PC-9 (cell line): ENCODE measurements at regions of chr4 and their contacts with region 1.

Region 1: GRCh38 chr4:165131247-165131832 is 18.7 kb upstream of the TMEM192 start:
- DNase-seq: peak; percentile 35 to 69
- H3K4me3 ChIP-seq: no peak overlapping the region
- H3K27ac ChIP-seq: no peak overlapping the region
- H3K4me1 ChIP-seq: no peaks in the 10 kb centered on the region
- H3K27me3 ChIP-seq: no peaks in the 10 kb centered on the region
- CTCF ChIP-seq: peak; percentile 89

Region 2: DNA sequence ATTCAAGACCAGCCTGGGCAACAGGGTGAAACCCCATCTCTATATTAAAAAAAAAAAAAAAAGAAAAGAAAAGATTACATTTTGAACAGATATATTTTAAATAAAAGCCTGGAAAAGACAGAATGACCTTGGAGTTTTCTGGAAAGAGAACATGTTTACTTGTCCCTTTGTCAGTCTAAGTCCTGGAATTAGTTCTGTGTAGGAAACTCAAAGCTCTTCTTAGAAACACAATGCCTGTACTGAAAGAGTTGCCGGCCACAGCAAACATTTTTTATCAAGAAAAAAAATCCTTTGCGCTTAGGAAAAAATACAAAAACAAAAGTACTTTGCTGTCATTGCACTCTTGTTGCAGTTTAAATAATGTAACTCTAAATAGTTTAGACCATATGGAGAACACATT is 317.8 kb before region 1 on chr4:
- CTCF ChIA-PET with region 1: no interaction called
- POLR2A ChIA-PET with region 1: no interaction called
- intact Hi-C with region 1: no loop called
- DNase-seq: no peak
- H3K4me3 ChIP-seq: no peak overlapping the region
- H3K27ac ChIP-seq: no peak overlapping the region
- H3K4me1 ChIP-seq: no peaks in the 10 kb centered on the region
- H3K27me3 ChIP-seq: no peaks in the 10 kb centered on the region
- CTCF ChIP-seq: no peak

Region 3: GRCh38 chr4:165152527-165152926 is 21.2 kb after region 1 on chr4:
- CTCF ChIA-PET with region 1: no interaction called
- POLR2A ChIA-PET with region 1: no interaction called
- intact Hi-C with region 1: no loop called
- DNase-seq: no peak
- H3K4me3 ChIP-seq: no peak overlapping the region
- H3K27ac ChIP-seq: no peak overlapping the region
- H3K4me1 ChIP-seq: no peaks in the 10 kb centered on the region
- H3K27me3 ChIP-seq: no peaks in the 10 kb centered on the region
- CTCF ChIP-seq: no peak

Region 4: DNA sequence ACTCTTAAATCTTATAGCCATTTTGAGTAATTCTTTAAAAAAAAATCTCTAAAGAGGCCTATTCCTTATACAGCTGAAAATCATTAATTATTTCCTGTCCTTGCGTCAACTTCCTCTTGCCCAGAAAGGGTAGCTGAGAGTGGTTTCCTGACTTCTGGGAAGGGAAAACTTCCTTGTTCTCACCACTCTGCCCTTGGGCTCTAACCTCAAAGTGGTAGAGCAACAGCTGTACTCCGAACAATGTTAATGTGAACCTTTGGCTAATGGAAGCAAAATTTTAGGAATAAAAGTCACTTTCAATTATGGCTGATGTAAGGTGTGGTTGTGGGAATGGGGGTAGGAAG is 91.3 kb after region 1 on chr4:
- CTCF ChIA-PET with region 1: no interaction called
- POLR2A ChIA-PET with region 1: no interaction called
- intact Hi-C with region 1: loop called (anchors 1 kb)
- DNase-seq: peak in 1 of 2 experiments; percentile 78
- H3K4me3 ChIP-seq: peak overlapping the region; percentile 16; the same call in 1 of the 2 replicates
- H3K27ac ChIP-seq: peak overlapping the region; percentile 97
- H3K4me1 ChIP-seq: peaks cover 35% of the 10 kb centered on the region
- H3K27me3 ChIP-seq: no peaks in the 10 kb centered on the region
- CTCF ChIP-seq: no peak

Region 5: GRCh38 chr4:165327211-165328100 is 196.1 kb after region 1 on chr4 and contains the start of gene MSMO1:
- CTCF ChIA-PET with region 1: interaction called, 3 read pairs
- POLR2A ChIA-PET with region 1: interaction called, 6 read pairs
- intact Hi-C with region 1: loop called (anchors 1 kb)
- DNase-seq: peak; percentile 94 to 99
- H3K4me3 ChIP-seq: peak within 1 kb of the TSS; percentile 98
- H3K27ac ChIP-seq: peak within 1 kb of the TSS; percentile 96
- H3K4me1 ChIP-seq: peaks cover 49% of the 10 kb centered on the region
- H3K27me3 ChIP-seq: no peaks in the 10 kb centered on the region
- CTCF ChIP-seq: no peak
- total RNA-seq, gene MSMO1: 111 and 117 TPM in 2 replicates

Region 6: GRCh38 chr4:165343353-165344191 is 212.2 kb after region 1 on chr4:
- CTCF ChIA-PET with region 1: interaction called, 4 read pairs
- POLR2A ChIA-PET with region 1: no interaction called
- intact Hi-C with region 1: loop called (anchors 1 kb)
- DNase-seq: no peak
- H3K4me3 ChIP-seq: no peak overlapping the region
- H3K27ac ChIP-seq: no peak overlapping the region
- H3K4me1 ChIP-seq: no peaks in the 10 kb centered on the region
- H3K27me3 ChIP-seq: no peaks in the 10 kb centered on the region
- CTCF ChIP-seq: peak; percentile 49; the same call in 1 of the 2 replicates

Region 7: GRCh38 chr4:165464813-165465381 is 333.6 kb after region 1 on chr4:
- CTCF ChIA-PET with region 1: no interaction called
- POLR2A ChIA-PET with region 1: no interaction called
- intact Hi-C with region 1: loop called (anchors 1 kb)
- DNase-seq: peak in 1 of 2 experiments; percentile 57
- H3K4me3 ChIP-seq: no peak overlapping the region
- H3K27ac ChIP-seq: no peak overlapping the region
- H3K4me1 ChIP-seq: no peaks in the 10 kb centered on the region
- H3K27me3 ChIP-seq: no peaks in the 10 kb centered on the region
- CTCF ChIP-seq: peak; percentile 88

Region 8: DNA sequence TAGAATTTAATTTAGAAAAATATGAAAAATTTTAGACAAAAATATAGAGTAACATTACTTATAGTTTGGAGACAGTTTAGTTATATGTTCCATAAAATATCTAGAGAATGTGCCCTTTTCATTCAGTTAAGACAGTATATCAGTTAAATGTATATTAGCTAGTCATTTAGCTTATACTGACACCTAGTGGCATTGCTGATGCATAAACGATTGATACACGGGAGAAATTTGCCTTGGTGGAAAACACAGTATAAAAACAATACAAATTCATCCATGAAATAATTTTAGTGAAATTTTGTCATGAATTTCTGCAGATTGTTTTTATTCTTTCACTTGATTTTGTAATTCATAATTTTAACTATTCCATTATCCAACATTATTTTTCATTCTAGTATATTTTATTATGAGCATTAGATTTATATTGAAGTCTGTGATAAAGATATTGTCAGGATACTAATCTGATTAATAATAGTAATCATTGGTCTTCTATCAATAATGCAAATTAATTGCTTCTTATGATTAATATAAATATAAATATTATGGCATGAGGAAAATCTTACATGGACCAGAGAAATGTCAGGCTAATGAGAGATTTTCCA is 960.7 kb after region 1 on chr4:
- CTCF ChIA-PET with region 1: no interaction called
- POLR2A ChIA-PET with region 1: no interaction called
- intact Hi-C with region 1: loop called (anchors 5 kb)
- DNase-seq: no peak
- H3K4me3 ChIP-seq: no peak overlapping the region
- H3K27ac ChIP-seq: no peak overlapping the region
- H3K4me1 ChIP-seq: no peaks in the 10 kb centered on the region
- H3K27me3 ChIP-seq: no peaks in the 10 kb centered on the region
- CTCF ChIP-seq: peak; percentile 73